ENCODE measurements at regions of chr5 and their contacts with region 1.

Region 1: GRCh38 chr5:16791036-16791705 is 144.9 kb downstream of the MYO10 start:
- DNase-seq: no peak
- ATAC-seq: peak; percentile 72
- H3K4me3 ChIP-seq: no peak overlapping the region
- H3K27ac ChIP-seq: no peak overlapping the region
- H3K4me1 ChIP-seq: no peaks in the 10 kb centered on the region
- H3K27me3 ChIP-seq: no peaks in the 10 kb centered on the region
- CTCF ChIP-seq: peak; percentile 75

Region 2: DNA sequence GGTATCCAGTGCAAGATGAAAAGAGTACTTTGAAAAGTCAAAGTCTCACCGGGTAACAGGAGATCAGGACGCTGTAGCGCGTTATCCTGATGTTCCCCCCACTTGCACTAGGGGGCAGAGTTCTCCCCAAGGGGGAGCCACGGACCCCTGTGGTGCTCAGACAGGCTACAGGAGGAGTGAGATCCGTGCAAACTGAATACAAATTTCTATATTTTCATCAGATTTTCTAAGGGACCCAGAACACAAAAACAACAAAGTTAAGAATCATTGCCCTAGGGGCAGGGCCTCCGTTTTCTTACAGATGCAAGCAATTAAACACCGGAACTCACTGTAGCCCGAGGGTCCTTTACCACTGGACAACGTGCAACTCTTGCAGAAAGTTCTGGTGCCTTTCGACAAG is 143.0 kb after region 1 on chr5:
- intact Hi-C with region 1: loop called (anchors 10 kb)
- DNase-seq: peak; percentile 72
- ATAC-seq: peak; percentile 59
- H3K4me3 ChIP-seq: peak overlapping the region; percentile 64
- H3K27ac ChIP-seq: peak overlapping the region; percentile 78
- H3K4me1 ChIP-seq: peaks cover 45% of the 10 kb centered on the region
- H3K27me3 ChIP-seq: no peaks in the 10 kb centered on the region
- CTCF ChIP-seq: peak; percentile 92

Region 3: DNA sequence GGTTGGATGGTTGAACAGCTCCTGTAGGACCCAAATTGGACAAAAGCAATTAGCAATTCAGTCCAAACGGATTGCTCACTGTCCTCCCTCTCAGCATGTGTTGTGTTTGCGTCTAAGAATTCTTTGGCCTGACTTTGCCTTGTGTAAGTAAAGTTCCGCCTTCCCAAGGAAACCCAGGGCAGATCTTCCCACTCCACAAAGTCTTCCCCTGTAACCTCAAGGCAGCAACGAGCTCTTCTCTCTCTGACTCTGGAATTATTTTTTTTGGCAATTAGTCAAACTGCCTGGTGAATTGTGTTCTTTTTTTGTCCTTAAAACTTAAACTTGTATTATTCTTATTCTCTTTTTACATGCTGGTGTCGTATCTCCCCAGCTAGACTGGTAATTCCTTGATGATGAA is 405.5 kb after region 1 on chr5:
- intact Hi-C with region 1: loop called (anchors 2 kb)
- DNase-seq: no peak
- ATAC-seq: no peak
- H3K4me3 ChIP-seq: no peak overlapping the region
- H3K27ac ChIP-seq: no peak overlapping the region
- H3K4me1 ChIP-seq: no peaks in the 10 kb centered on the region
- H3K27me3 ChIP-seq: no peaks in the 10 kb centered on the region
- CTCF ChIP-seq: no peak

Measured in upper lobe of right lung (tissue), 1 donor.